PC-9 (cell line): ENCODE measurements at regions of chr14 and their contacts with region 1.

Region 1: GRCh38 chr14:68685419-68686204 is 107.3 kb downstream of the ZFP36L1 start:
- DNase-seq: peak; percentile 68 to 97
- H3K4me3 ChIP-seq: no peak overlapping the region
- H3K27ac ChIP-seq: peak overlapping the region; percentile 90
- H3K4me1 ChIP-seq: peaks cover 87% of the 10 kb centered on the region
- H3K27me3 ChIP-seq: no peaks in the 10 kb centered on the region
- CTCF ChIP-seq: no peak

Region 2: DNA sequence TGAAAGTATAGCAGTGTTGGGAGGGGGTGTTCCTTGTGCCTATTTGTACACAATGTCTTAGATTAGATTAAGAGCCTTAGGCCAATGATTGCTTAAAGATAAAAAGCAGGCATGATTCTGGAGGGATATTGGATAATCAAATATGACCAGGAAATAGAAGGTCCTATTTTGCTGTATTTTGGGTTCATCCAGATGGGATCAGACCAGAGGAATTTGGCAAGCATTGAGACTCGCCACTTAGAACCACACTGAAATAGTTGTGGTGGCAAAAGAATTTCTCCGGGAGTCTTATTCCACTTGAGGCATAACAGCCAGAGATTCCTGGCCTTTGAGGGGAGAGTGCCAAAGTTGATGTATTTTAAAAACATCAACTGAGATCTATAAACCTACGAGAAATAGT is 538.8 kb before region 1 on chr14:
- CTCF ChIA-PET with region 1: no interaction called
- POLR2A ChIA-PET with region 1: no interaction called
- intact Hi-C with region 1: loop called (anchors 2 kb)
- DNase-seq: peak; percentile 71 to 98
- H3K4me3 ChIP-seq: no peak overlapping the region
- H3K27ac ChIP-seq: peak overlapping the region; percentile 90
- H3K4me1 ChIP-seq: peaks cover 37% of the 10 kb centered on the region
- H3K27me3 ChIP-seq: no peaks in the 10 kb centered on the region
- CTCF ChIP-seq: no peak

Region 3: DNA sequence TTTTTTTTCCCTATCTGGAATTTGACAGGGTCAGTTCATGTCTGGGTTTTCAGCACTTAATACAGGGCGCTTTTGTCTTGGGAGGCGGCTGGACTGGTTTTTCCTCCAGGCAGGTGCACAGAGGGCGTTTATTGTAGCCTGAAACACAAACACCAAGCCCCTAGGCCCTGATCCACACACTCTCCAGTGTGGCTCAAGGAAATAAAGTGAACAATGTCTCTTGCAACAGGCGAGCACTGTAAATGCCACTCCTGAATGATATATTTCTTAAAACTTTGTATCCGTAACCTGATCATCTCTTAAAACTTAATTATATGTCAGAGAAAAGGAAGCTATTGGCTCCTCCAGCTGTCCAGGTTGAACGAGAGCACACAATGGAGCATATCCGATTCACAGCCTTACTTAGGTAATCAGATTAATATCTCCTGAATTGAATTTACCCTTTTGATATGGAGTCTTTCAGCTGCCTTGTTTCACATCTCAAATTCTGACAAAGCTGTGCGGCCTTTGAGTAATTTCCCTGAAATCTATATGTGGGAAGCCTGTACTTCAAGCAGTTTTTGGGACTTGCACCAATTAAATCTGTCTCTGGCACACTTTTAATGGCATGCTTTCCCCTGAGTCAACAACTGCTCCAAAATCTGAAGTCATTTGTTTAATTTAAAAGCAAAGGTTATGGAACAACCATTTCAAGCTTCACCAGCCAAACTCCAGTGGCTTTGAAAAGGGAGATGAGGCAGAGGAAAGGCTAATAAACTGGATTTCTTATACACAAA is 378.4 kb before region 1 on chr14:
- CTCF ChIA-PET with region 1: no interaction called
- POLR2A ChIA-PET with region 1: no interaction called
- intact Hi-C with region 1: no loop called
- DNase-seq: peak; percentile 73 to 99
- H3K4me3 ChIP-seq: peak overlapping the region; percentile 22; the same call in 1 of the 2 replicates
- H3K27ac ChIP-seq: peak overlapping the region; percentile 95
- H3K4me1 ChIP-seq: peaks cover 62% of the 10 kb centered on the region
- H3K27me3 ChIP-seq: no peaks in the 10 kb centered on the region
- CTCF ChIP-seq: no peak

Region 4: GRCh38 chr14:68526420-68527105 is 159.0 kb before region 1 on chr14:
- CTCF ChIA-PET with region 1: no interaction called
- POLR2A ChIA-PET with region 1: no interaction called
- intact Hi-C with region 1: loop called (anchors 5 kb)
- DNase-seq: peak; percentile 71 to 74
- H3K4me3 ChIP-seq: no peak overlapping the region
- H3K27ac ChIP-seq: peak overlapping the region; percentile 87
- H3K4me1 ChIP-seq: peaks cover 45% of the 10 kb centered on the region
- H3K27me3 ChIP-seq: no peaks in the 10 kb centered on the region
- CTCF ChIP-seq: no peak

Region 5: GRCh38 chr14:68627880-68628607 is 57.6 kb before region 1 on chr14:
- CTCF ChIA-PET with region 1: no interaction called
- POLR2A ChIA-PET with region 1: interaction called, 4 read pairs
- intact Hi-C with region 1: loop called (anchors 1 kb)
- DNase-seq: peak; percentile 72 to 81
- H3K4me3 ChIP-seq: peak overlapping the region; percentile 60
- H3K27ac ChIP-seq: peak overlapping the region; percentile 92
- H3K4me1 ChIP-seq: peaks cover 45% of the 10 kb centered on the region
- H3K27me3 ChIP-seq: no peaks in the 10 kb centered on the region
- CTCF ChIP-seq: no peak

Region 6: GRCh38 chr14:68714991-68715964 is 29.7 kb after region 1 on chr14:
- CTCF ChIA-PET with region 1: no interaction called
- POLR2A ChIA-PET with region 1: no interaction called
- intact Hi-C with region 1: no loop called
- DNase-seq: no peak
- H3K4me3 ChIP-seq: no peak overlapping the region
- H3K27ac ChIP-seq: no peak overlapping the region
- H3K4me1 ChIP-seq: no peaks in the 10 kb centered on the region
- H3K27me3 ChIP-seq: no peaks in the 10 kb centered on the region
- CTCF ChIP-seq: no peak

Region 7: GRCh38 chr14:68788996-68789820 is 103.6 kb after region 1 on chr14:
- CTCF ChIA-PET with region 1: interaction called, 3 read pairs
- POLR2A ChIA-PET with region 1: interaction called, 26 read pairs
- intact Hi-C with region 1: loop called (anchors 1 kb)
- DNase-seq: peak; percentile 77 to 88
- H3K4me3 ChIP-seq: peak overlapping the region; percentile 95
- H3K27ac ChIP-seq: peak overlapping the region; percentile 98
- H3K4me1 ChIP-seq: peaks cover 45% of the 10 kb centered on the region
- H3K27me3 ChIP-seq: no peaks in the 10 kb centered on the region
- CTCF ChIP-seq: peak; percentile 80

Region 8: DNA sequence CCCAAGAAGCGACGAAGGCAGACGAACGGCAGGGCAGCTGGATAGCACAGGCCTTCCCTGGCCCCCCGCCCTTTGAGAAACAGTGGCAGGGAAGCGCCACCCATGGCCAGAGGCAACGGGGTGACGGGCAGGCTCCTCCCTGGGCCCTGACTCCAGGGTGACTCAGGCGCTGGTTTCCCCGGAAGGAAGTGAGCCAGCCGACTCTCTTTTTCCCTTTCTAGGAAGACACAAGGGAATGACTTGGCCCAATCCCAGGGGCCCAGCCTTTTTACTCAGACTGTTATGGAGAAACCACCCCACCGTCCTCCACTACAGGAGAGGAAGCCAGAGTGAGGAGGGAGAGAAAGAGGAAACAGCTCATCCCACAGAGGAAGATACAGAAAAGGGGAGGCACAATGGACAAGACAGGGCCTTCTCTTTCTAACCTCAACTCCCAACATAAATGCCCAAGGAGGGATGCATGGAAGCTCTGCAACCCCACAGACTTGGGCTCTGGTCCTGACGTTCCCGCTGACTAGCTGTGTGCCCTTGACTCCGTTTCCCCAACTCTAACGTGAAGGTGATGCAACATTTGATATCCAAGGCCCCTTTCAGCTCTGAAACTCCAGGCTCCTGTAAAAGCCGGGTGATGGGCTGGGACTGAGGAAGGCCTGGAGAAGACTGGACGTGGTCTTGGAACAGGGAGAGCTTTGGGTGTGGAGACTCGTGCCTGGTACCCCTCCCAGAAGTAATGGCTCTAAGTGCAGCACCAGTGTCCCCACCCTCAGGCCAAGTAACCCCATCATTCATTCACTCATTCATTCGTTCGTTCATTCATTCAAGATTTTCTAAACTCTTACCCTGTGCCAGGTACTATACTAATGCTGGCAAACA is 265.7 kb after region 1 on chr14:
- CTCF ChIA-PET with region 1: no interaction called
- POLR2A ChIA-PET with region 1: no interaction called
- intact Hi-C with region 1: no loop called
- DNase-seq: peak; percentile 96 to 97
- H3K4me3 ChIP-seq: peak overlapping the region; percentile 32; the same call in 1 of the 2 replicates
- H3K27ac ChIP-seq: peak overlapping the region; percentile 77
- H3K4me1 ChIP-seq: peaks cover 60% of the 10 kb centered on the region
- H3K27me3 ChIP-seq: no peaks in the 10 kb centered on the region
- CTCF ChIP-seq: no peak

Region 9: GRCh38 chr14:69005432-69006147 is 320.0 kb after region 1 on chr14:
- CTCF ChIA-PET with region 1: no interaction called
- POLR2A ChIA-PET with region 1: no interaction called
- intact Hi-C with region 1: no loop called
- DNase-seq: peak; percentile 71 to 84
- H3K4me3 ChIP-seq: peak overlapping the region; percentile 10; the same call in 1 of the 2 replicates
- H3K27ac ChIP-seq: 0 out of 2 replicates have a peak overlapping the region, but pooled peaks have one; percentile 2
- H3K4me1 ChIP-seq: peaks cover 27% of the 10 kb centered on the region
- H3K27me3 ChIP-seq: no peaks in the 10 kb centered on the region
- CTCF ChIP-seq: no peak